ENCODE measurements at regions of chrX and their contacts with region 1.

Region 1: DNA sequence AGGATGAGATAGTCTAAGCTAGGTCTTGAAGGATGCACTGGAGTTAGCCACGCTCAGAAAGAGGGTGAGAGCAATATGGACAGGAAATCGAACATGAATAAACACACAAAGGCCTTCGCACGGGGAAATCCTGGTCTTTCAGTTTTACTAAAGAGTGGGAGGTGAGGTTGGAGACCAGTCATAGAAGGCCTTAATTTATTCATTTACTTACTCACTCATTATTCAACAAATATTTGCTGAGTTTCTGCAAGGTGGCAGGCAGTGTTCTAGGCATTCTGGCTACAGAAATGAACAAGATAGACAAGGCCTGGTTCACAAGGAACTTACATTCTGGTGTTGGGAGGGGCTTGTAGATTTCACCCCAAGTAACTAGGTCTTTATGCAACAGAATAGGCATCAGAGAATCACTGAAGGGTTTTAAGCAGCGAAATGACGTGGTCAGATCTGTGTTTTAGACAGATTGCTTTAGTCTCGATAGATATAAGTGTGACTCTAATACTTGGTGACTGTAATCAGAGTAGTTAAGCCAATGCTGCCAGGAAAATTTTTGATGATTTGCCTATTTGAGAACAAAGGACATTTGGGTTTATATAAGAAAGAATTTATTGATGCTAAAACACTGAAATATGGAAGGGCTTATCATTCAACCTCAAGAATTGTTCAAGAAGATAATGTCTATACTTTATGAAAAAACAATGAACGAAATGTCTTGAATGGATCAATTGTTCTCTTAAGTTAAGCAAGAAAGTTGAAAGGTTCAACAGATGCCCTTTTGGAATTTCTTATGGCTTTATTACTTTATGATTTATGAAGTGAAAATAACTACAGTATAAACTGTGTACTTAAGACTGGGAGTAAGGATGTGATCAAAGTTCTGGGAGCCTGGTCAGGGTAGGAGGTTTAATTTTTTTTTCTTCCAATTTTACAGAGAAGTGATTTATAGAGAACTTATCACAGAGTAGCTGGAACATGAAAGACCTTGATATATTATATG is 184.4 kb upstream of the CASK start:
- DNase-seq: no peak
- H3K4me3 Mint-ChIP-seq: peak overlapping the region; percentile 31
- H3K27ac Mint-ChIP-seq: peak overlapping the region; percentile 52
- H3K4me1 Mint-ChIP-seq: peaks cover 29% of the 10 kb centered on the region
- H3K27me3 Mint-ChIP-seq: no peaks in the 10 kb centered on the region

Region 2: GRCh38 chrX:42079968-42080367 is 27.8 kb before region 1 on chrX:
- intact Hi-C with region 1: no loop called
- DNase-seq: no peak
- H3K4me3 Mint-ChIP-seq: no peak overlapping the region
- H3K27ac Mint-ChIP-seq: no peak overlapping the region
- H3K4me1 Mint-ChIP-seq: peaks cover 5% of the 10 kb centered on the region
- H3K27me3 Mint-ChIP-seq: no peaks in the 10 kb centered on the region

Region 3: GRCh38 chrX:42093756-42094155 is 14.0 kb before region 1 on chrX:
- intact Hi-C with region 1: loop called (anchors 1 kb)
- DNase-seq: no peak
- H3K4me3 Mint-ChIP-seq: no peak overlapping the region
- H3K27ac Mint-ChIP-seq: peak overlapping the region; percentile 29
- H3K4me1 Mint-ChIP-seq: peaks cover 28% of the 10 kb centered on the region
- H3K27me3 Mint-ChIP-seq: no peaks in the 10 kb centered on the region

Region 4: DNA sequence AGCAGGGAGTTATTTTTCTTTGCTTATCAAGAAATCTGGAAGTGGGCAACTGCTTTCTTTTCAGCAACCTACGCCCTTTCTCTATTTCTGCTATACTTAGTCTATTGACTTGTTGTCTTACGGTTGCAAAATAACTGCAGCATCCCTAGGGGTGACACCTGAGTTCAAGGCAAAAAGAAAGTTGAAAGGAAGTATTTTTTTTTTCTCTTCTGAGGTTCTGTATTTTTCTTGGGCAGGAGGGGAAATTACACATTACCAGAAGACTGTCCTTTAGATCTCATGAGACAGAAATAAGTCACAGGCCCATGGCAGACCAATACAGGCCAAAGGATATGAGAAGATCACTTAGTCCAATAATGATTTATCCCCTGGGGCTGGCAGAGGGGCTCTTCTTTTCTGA is 20.2 kb after region 1 on chrX:
- intact Hi-C with region 1: loop called (anchors 1 kb)
- DNase-seq: no peak
- H3K4me3 Mint-ChIP-seq: peak overlapping the region; percentile 4
- H3K27ac Mint-ChIP-seq: peak overlapping the region; percentile 72
- H3K4me1 Mint-ChIP-seq: peaks cover 68% of the 10 kb centered on the region
- H3K27me3 Mint-ChIP-seq: no peaks in the 10 kb centered on the region

Region 5: DNA sequence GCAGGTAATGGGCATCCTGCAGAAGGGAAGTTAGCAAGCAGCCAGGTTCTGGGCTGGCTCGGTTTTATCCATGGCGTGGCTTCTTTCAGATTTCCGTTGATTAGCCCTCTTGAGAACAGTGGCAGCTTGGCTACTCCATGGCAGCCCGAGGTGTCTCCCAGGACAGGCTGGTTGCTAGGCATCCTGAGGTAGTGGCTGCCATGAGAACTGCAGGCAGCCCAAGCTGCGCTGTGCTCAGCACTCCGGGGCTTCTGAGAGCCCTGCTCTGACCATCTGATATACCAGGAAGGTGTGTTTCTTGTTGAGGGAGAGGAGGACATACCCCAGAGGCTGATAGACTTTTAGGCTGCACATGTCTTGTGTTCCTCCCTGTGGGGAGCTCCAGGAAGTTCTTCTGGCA is 69.0 kb after region 1 on chrX:
- intact Hi-C with region 1: no loop called
- DNase-seq: no peak
- H3K4me3 Mint-ChIP-seq: no peak overlapping the region
- H3K27ac Mint-ChIP-seq: no peak overlapping the region
- H3K4me1 Mint-ChIP-seq: no peaks in the 10 kb centered on the region
- H3K27me3 Mint-ChIP-seq: no peaks in the 10 kb centered on the region

Region 6: DNA sequence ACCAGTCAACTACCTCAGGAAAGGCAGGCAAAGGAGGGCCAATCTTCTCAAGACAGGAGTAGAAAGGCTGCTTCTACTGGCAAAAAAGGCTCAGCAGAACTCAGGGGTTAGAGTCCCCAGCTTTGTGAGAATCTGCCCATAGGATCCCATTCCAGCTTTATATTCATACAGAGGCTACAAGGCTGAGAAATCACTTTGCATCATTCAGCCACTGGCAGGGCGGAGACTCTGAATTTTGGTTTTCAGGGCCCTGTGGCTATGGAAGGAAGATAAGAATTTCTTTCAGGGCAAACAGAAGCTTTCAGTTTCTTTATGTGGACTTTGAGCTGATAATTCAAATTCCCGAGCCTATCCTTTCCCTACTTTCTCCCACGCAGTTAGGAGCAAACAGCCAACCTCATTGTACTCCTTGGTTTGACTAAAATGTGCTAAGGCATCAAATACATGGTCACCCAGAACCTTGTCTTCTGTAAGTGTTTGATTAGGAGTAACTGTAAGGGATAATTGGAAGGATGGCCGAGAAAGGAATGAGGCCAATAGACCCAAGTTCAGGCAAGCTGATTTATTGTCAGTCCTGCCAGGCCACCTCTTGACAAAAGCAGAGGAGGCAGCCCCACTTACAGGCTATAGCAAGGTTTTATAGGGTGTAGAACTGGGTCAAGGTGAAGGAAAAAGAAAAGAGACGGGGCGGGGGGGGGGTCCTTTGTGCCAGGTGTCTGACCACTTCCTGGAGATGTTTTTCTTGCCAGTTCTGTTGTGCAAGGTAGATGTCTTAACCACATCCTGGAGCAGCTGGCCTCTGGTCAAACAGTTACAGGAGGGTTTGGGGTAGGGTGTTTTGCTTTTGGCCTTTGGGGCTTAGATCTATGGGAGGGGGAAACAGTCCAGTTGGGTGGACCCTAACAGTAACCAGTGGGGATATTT is 835.5 kb after region 1 on chrX:
- intact Hi-C with region 1: loop called (anchors 2 kb)
- DNase-seq: peak; percentile 12
- H3K4me3 Mint-ChIP-seq: peak overlapping the region; percentile 27
- H3K27ac Mint-ChIP-seq: peak overlapping the region; percentile 85
- H3K4me1 Mint-ChIP-seq: peaks cover 79% of the 10 kb centered on the region
- H3K27me3 Mint-ChIP-seq: no peaks in the 10 kb centered on the region

Measured in activated T-helper 1 cell treated with anti-CD3 and anti-CD28 coated beads, Interleukin-12 subunit alpha, Interleukin-12 subunit beta, Interleukin-2, Interleukin-4 antibody, amounts not matched to agents 30 ng/mL and 10 ng/mL and 1 ng/mL, durations not matched to agents 14 hours and 24 hours and 36 hours (primary cell).